ENCODE measurements at regions of chr15 and their contacts with region 1.

Region 1: GRCh38 chr15:65638681-65639089 is 16.9 kb downstream of the SLC24A1 start:
- DNase-seq: peak; percentile 83
- H3K4me3 ChIP-seq: no peak overlapping the region
- H3K27ac ChIP-seq: no peak overlapping the region
- H3K4me1 ChIP-seq: peaks cover 23% of the 10 kb centered on the region
- CTCF ChIP-seq: peak; percentile 98

Region 2: DNA sequence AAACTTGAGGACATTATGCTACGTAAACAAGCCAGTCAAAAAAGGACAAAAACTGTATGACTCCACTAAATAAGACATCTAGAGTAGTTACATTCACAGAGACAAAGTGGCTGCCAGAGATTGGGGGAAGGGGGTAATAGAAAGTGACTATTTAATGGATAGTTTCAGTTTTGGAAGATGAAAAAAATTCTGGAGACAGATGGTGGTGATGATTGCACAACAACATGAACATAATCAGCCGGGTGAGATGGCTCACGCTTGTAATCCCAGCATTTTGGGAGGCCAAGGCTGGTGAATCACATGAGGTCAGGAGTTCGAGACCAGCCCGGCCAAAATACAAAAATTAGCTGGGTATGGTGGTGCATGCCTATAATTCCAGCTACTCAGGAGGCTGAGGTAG is 161.8 kb before region 1 on chr15:
- CTCF ChIA-PET with region 1: no interaction called
- POLR2A ChIA-PET with region 1: no interaction called
- intact Hi-C with region 1: no loop called
- DNase-seq: no peak
- H3K4me3 ChIP-seq: no peak overlapping the region
- H3K27ac ChIP-seq: no peak overlapping the region
- H3K4me1 ChIP-seq: peaks cover 8% of the 10 kb centered on the region
- CTCF ChIP-seq: no peak

Region 3: DNA sequence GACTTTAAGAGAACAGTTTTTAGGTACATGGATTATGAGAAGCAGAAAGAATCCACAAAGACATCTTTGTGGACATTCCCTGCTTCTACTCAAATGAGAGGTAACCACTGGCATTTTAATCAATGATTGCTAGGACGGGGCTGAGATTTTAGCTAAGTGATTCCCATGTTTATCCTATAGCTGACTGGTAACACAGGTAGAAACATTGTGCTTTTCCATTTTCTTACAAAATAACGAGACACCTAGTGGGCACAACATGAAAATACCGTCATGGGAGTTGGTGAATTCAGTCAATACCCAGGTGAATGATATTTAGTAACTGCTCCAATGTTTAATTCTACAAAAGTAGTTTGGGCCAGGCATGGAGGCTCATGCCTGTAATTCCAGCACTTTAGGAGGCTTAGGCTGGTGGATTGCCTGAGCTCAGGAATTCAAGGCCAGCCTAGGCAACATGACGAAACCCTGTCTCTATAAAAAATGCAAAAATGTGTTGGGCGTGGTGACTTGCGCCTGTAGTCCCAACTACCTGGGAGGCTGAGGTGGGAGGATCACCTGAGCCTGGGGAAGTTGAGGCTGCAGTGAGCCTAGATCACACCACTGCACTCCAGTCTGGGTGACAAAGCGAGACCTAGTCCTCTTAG is 190.6 kb after region 1 on chr15:
- CTCF ChIA-PET with region 1: interaction called, 3 read pairs
- POLR2A ChIA-PET with region 1: no interaction called
- intact Hi-C with region 1: loop called (anchors 1 kb)
- DNase-seq: peak; percentile 73
- H3K4me3 ChIP-seq: no peak overlapping the region
- H3K27ac ChIP-seq: no peak overlapping the region
- H3K4me1 ChIP-seq: peaks cover 16% of the 10 kb centered on the region
- CTCF ChIP-seq: peak; percentile 87

Region 4: DNA sequence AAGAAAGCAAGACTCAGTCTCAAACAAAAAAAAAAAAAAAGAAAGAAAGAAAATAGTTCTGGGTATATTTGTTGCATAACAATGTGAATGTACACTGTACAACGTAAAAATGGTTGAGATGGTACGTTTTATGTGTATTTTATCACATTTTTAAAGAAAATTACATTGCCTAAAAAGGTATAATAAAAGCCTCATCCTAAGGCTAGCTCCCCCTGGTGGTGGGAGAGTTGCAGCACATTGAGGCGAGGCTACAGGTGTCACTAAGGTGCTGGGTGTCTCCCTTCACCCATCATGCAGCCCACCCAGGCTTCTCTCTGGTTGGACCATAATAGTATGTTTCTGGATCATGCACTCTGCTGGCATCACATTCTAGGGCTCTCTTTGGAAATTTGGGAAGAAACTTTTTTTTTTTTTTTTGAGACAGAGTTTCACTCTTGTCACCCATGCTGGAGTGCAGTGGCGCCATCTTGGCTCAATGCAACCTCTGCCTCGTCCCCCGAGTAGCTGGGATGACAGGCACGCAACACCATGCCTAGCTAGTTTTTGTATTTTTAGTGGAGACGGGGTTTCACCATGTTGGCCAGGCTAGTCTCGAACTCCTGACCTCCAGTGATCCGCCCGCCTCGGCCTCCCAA is 218.3 kb after region 1 on chr15:
- CTCF ChIA-PET with region 1: no interaction called
- POLR2A ChIA-PET with region 1: no interaction called
- intact Hi-C with region 1: loop called (anchors 2 kb)
- DNase-seq: peak; percentile 85
- H3K4me3 ChIP-seq: no peak overlapping the region
- H3K27ac ChIP-seq: no peak overlapping the region
- H3K4me1 ChIP-seq: no peaks in the 10 kb centered on the region
- CTCF ChIP-seq: peak; percentile 94

Region 5: GRCh38 chr15:65964792-65965433 is 326.2 kb after region 1 on chr15:
- CTCF ChIA-PET with region 1: no interaction called
- POLR2A ChIA-PET with region 1: no interaction called
- intact Hi-C with region 1: no loop called
- DNase-seq: no peak
- H3K4me3 ChIP-seq: no peak overlapping the region
- H3K27ac ChIP-seq: no peak overlapping the region
- H3K4me1 ChIP-seq: peaks cover 7% of the 10 kb centered on the region
- CTCF ChIP-seq: no peak

Measured in OCI-LY7 (cell line).